Vagina (tissue), 2 donors: ENCODE measurements at regions of chr10 and their contacts with region 1.

Region 1: DNA sequence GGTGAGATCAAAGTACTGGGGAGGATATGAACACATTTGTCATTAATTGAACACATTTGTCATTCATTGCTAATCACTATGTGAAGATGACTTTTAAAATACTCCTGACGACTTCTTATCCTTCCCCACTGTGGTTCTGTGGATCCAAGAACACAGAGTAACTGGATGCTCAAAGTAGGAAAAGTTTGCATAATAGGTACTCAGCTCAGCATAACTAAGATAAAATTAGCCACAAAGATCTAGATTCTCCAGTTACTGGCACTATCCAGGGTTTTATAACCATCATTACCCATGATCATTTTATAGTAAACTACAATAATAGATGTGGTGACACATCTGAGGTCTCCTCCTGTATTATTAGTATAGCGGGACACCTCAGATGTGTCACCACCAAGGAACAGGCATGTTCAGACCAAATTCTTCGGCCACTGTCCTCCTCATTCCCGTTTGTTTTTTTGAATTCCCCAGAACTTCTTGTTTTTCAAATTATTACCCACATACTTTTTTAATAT is 163.6 kb upstream of the LRRTM3 start:
- DNase-seq: no peak
- H3K4me3 ChIP-seq: no peak overlapping the region
- H3K27ac ChIP-seq: no peak overlapping the region
- H3K4me1 ChIP-seq: no peaks in the 10 kb centered on the region
- H3K27me3 ChIP-seq: no peaks in the 10 kb centered on the region
- CTCF ChIP-seq: no peak
- POLR2A ChIP-seq: no peak

Region 2: GRCh38 chr10:66555061-66555460 is 207.2 kb before region 1 on chr10:
- intact Hi-C with region 1: no loop called
- DNase-seq: no peak
- H3K4me3 ChIP-seq: no peak overlapping the region
- H3K27ac ChIP-seq: no peak overlapping the region
- H3K4me1 ChIP-seq: no peaks in the 10 kb centered on the region
- H3K27me3 ChIP-seq: no peaks in the 10 kb centered on the region
- CTCF ChIP-seq: no peak
- POLR2A ChIP-seq: no peak

Region 3: GRCh38 chr10:67602268-67602950 is 840.1 kb after region 1 on chr10:
- intact Hi-C with region 1: loop called (anchors 5 kb)
- DNase-seq: no peak
- H3K4me3 ChIP-seq: no peak overlapping the region
- H3K27ac ChIP-seq: no peak overlapping the region
- H3K4me1 ChIP-seq: no peaks in the 10 kb centered on the region
- H3K27me3 ChIP-seq: no peaks in the 10 kb centered on the region
- CTCF ChIP-seq: no peak
- POLR2A ChIP-seq: no peak